ENCODE measurements at regions of chr2 and their contacts with region 1.

Region 1: GRCh38 chr2:42792583-42793333 is at the start of gene HAAO:
- DNase-seq: peak; percentile 91 to 95
- H3K4me3 ChIP-seq: peak within 1 kb of the TSS; percentile 87
- H3K4me3 Mint-ChIP-seq: peak within 1 kb of the TSS; percentile 79
- H3K27ac Mint-ChIP-seq: peak within 1 kb of the TSS; percentile 82
- H3K4me1 ChIP-seq: peaks cover 12% of the 10 kb centered on the region
- H3K4me1 Mint-ChIP-seq: peaks cover 46% of the 10 kb centered on the region
- H3K27me3 ChIP-seq: no peaks in the 10 kb centered on the region
- H3K27me3 Mint-ChIP-seq: no peaks in the 10 kb centered on the region
- CTCF ChIP-seq: no peak
- total RNA-seq, gene HAAO: 44.1 and 47.5 TPM in 2 replicates

Region 2: DNA sequence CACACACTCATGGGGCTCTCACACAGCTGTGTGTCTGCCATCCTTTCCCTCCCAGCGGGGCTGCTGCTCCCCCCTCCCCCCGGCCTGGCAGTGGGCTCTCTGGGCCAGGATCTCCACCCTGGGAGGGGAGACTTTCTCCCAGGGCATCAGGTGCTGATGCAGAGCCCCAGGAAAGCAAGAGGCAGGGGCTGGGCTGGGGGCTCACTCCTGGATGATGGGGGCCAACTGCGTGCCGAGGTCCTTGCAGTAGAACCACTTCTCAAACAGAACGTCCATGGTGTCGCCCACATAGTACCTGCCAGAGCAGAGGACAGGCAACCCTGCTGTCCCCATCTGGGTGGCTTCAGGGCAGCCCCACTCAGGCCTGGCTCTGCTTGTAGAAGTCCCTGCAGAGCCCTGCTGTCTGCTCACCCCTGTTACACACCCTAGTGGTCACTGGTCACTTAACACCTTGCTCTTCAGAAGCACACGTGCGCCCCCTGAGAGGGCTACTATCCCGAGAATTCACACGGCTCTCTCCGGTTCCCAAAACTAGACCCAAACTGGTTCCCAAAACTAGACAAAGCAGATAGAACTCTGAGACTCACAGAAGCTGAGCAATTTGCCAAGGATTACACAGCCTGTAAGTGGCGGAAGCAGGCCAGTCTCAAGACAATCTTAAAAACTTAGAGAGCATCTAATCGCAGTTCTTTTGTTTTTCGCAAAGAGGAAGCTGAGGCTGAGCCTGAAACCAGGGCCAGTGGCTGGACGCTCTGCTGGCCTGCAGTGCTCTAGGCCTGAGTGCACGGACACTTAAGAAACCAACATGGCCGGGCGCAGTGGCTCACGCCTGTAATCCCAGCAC is 22.2 kb before region 1 on chr2:
- CTCF ChIA-PET with region 1: interaction called, 5 read pairs
- POLR2A ChIA-PET with region 1: interaction called, 17 read pairs
- intact Hi-C with region 1: no loop called
- DNase-seq: peak in 1 of 2 experiments; percentile 53
- H3K4me3 ChIP-seq: no peak overlapping the region
- H3K4me3 Mint-ChIP-seq: no peak overlapping the region
- H3K27ac Mint-ChIP-seq: no peak overlapping the region
- H3K4me1 ChIP-seq: no peaks in the 10 kb centered on the region
- H3K4me1 Mint-ChIP-seq: no peaks in the 10 kb centered on the region
- H3K27me3 ChIP-seq: no peaks in the 10 kb centered on the region
- H3K27me3 Mint-ChIP-seq: no peaks in the 10 kb centered on the region
- CTCF ChIP-seq: peak; percentile 35 to 63

Region 3: GRCh38 chr2:42781181-42781580 is 11.6 kb before region 1 on chr2:
- CTCF ChIA-PET with region 1: no interaction called
- POLR2A ChIA-PET with region 1: interaction called, 5 read pairs
- intact Hi-C with region 1: loop called (anchors 1 kb)
- DNase-seq: peak; percentile 62 to 80
- H3K4me3 ChIP-seq: no peak overlapping the region
- H3K4me3 Mint-ChIP-seq: peak overlapping the region; percentile 33
- H3K27ac Mint-ChIP-seq: no peak overlapping the region
- H3K4me1 ChIP-seq: peaks cover 13% of the 10 kb centered on the region
- H3K4me1 Mint-ChIP-seq: peaks cover 16% of the 10 kb centered on the region
- H3K27me3 ChIP-seq: no peaks in the 10 kb centered on the region; the same call in 1 of the 2 replicates
- H3K27me3 Mint-ChIP-seq: no peaks in the 10 kb centered on the region
- CTCF ChIP-seq: no peak

Region 4: DNA sequence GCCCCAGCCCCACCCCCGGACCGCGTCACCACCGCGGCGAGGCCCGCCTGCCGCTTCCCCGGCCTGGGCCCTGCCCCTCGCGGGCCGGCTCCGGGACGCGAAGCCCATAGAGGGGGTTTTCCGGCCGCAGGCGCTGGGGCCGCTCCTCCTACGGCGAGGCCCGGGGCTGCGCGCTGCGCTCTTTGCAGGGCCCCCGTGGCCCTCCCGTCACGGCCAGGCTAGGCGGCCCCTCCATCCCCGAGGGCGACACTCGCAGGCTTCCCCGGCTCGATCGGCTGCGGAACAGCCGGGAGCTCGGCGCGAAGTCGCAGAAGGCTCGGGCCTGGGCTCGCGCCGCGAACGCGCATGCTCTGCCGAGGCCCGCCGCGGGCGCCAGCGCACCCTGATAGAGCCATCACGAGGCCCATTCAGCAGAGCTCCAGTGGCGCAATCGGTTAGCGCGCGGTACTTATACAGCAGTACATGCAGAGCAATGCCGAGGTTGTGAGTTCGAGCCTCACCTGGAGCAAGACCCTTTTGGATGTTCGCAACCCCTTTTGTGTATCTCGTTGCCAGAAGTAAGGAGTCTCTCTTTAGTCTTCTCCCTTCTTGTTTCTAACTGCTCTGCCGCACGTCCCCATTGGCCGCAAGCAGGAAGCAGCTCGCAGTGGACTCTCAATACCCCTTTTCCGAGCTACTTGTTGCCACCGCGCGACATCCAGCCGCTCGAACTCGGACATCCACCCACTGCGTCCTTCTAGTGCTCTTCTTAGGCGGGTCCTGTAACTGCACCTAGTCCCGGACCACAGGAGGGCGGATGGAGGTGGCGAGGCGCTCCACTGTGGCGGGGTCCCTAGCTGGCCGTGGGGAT is 17.6 kb after region 1 on chr2:
- CTCF ChIA-PET with region 1: interaction called, 33 read pairs
- POLR2A ChIA-PET with region 1: interaction called, 11 read pairs
- intact Hi-C with region 1: loop called (anchors 1 kb)
- DNase-seq: peak; percentile 95 to 97
- H3K4me3 ChIP-seq: peak overlapping the region; percentile 80
- H3K4me3 Mint-ChIP-seq: peak overlapping the region; percentile 96
- H3K27ac Mint-ChIP-seq: peak overlapping the region; percentile 94
- H3K4me1 ChIP-seq: peaks cover 5% of the 10 kb centered on the region; the same call in 1 of the 2 replicates
- H3K4me1 Mint-ChIP-seq: peaks cover 14% of the 10 kb centered on the region
- H3K27me3 ChIP-seq: no peaks in the 10 kb centered on the region
- H3K27me3 Mint-ChIP-seq: no peaks in the 10 kb centered on the region
- CTCF ChIP-seq: peak in 1 of 2 experiments; percentile 3

Region 5: GRCh38 chr2:42964439-42965083 is 171.8 kb after region 1 on chr2:
- CTCF ChIA-PET with region 1: no interaction called
- POLR2A ChIA-PET with region 1: no interaction called
- intact Hi-C with region 1: no loop called
- DNase-seq: no peak
- H3K4me3 ChIP-seq: no peak overlapping the region
- H3K4me3 Mint-ChIP-seq: no peak overlapping the region
- H3K27ac Mint-ChIP-seq: no peak overlapping the region
- H3K4me1 ChIP-seq: no peaks in the 10 kb centered on the region
- H3K4me1 Mint-ChIP-seq: no peaks in the 10 kb centered on the region
- H3K27me3 ChIP-seq: no peaks in the 10 kb centered on the region
- H3K27me3 Mint-ChIP-seq: no peaks in the 10 kb centered on the region
- CTCF ChIP-seq: no peak